ENCODE measurements at regions of chr14 and their contacts with region 1.

Region 1: GRCh38 chr14:75088574-75089373 is 19.3 kb downstream of the ZC2HC1C start:
- DNase-seq: peak; percentile 52
- H3K4me3 ChIP-seq: no peak overlapping the region
- H3K27ac ChIP-seq: no peak overlapping the region
- H3K4me1 ChIP-seq: no peaks in the 10 kb centered on the region
- H3K27me3 ChIP-seq: no peaks in the 10 kb centered on the region
- CTCF ChIP-seq: peak; percentile 30 to 77 (median 71)
- POLR2A ChIP-seq: no peak

Region 2: DNA sequence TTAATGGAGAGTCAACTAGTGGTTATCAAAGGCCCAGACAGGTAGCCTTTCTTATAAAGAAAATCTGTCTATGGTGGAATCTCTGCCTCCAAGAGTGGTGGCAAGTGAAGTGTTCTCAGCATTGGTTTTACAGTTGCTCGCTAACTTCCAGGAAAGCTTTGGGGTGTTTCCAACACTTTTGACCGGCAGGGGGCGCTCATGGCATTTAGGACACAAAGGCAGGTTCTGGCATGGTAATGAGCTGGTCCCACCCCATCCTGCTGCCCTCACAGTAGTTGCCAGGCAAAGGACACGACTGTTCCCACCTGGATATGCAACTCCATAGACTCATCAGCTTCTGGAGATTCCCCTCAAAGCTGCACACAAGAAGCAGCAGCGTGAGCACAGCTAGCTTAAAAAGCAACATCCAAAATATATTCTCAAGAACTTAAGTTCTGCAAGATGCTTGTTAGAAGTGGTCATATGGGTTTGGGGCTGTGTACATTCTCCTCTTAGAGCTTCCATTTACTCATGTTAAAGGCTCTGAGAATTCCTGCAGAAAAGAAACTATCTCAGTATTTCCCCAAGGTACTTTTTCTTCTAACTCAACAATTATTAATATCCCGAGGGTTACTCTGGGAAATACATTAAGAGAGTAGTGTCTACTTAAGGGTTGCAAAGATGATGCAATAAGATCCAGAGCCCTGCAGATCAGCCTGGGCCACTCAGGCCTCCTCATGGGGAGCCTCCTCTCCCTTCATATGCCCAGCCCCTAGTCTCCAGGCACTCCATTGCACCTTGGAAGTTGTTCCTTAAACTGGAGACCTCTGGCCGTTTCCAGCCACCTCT is 227.7 kb before region 1 on chr14:
- intact Hi-C with region 1: loop called (anchors 5 kb)
- DNase-seq: peak; percentile 86
- H3K4me3 ChIP-seq: no peak overlapping the region
- H3K27ac ChIP-seq: no peak overlapping the region
- H3K4me1 ChIP-seq: no peaks in the 10 kb centered on the region
- H3K27me3 ChIP-seq: no peaks in the 10 kb centered on the region
- CTCF ChIP-seq: peak; percentile 66 to 89 (median 79)
- POLR2A ChIP-seq: no peak

Region 3: GRCh38 chr14:74913986-74914573 is 174.7 kb before region 1 on chr14:
- intact Hi-C with region 1: loop called (anchors 2 kb)
- DNase-seq: peak; percentile 68
- H3K4me3 ChIP-seq: no peak overlapping the region
- H3K27ac ChIP-seq: peak overlapping the region in 1 of 2 donors; percentile 21
- H3K4me1 ChIP-seq: no peaks in the 10 kb centered on the region
- H3K27me3 ChIP-seq: no peaks in the 10 kb centered on the region
- CTCF ChIP-seq: peak; percentile 25 to 77 (median 66)
- POLR2A ChIP-seq: no peak

Region 4: DNA sequence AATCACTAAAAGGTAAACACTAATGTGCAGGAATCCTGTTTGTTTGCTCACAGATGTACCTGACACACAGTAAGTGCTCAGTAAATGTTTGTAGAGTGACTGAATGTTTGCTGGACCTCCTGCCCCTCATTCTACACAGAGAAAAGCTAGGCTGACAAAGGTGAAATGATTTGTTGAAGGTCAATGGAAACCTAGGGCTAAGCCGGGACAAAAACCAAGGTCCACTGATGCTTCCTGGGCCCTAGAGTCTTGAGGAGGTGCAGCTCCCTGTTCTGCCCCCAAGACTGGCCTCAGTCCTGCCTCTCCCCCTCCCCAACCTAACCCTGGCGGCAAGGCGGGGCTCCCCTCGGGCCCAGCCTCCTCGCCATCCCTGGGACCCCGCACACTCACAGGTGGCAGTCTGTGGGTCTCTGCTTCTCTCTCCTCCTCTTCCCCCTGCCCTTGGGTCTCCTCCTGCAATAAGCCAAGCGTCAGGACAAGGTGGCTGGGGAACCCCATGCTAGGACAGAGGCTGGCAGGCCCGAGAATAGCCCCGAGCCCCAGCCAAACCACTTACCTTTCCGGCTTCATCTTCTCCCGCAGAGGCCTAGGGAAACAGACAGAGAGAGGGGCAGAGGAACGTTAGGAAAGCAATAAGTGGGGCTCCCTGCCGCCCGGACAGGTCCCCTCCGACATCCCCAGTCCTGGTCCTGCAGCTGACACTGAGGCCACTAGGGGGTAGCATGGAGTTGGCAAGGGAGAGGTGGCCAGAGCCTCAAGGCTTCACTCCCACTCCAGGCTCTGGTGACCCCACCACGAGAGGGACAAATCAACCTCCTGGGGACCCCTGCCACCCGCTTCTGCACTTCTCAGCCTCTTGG is 142.7 kb before region 1 on chr14:
- intact Hi-C with region 1: loop called (anchors 2 kb)
- DNase-seq: peak; percentile 66
- H3K4me3 ChIP-seq: no peak overlapping the region
- H3K27ac ChIP-seq: peak overlapping the region in 1 of 2 donors; percentile 25
- H3K4me1 ChIP-seq: no peaks in the 10 kb centered on the region
- H3K27me3 ChIP-seq: no peaks in the 10 kb centered on the region
- CTCF ChIP-seq: peak; percentile 72 to 91 (median 81)
- POLR2A ChIP-seq: no peak

Region 5: DNA sequence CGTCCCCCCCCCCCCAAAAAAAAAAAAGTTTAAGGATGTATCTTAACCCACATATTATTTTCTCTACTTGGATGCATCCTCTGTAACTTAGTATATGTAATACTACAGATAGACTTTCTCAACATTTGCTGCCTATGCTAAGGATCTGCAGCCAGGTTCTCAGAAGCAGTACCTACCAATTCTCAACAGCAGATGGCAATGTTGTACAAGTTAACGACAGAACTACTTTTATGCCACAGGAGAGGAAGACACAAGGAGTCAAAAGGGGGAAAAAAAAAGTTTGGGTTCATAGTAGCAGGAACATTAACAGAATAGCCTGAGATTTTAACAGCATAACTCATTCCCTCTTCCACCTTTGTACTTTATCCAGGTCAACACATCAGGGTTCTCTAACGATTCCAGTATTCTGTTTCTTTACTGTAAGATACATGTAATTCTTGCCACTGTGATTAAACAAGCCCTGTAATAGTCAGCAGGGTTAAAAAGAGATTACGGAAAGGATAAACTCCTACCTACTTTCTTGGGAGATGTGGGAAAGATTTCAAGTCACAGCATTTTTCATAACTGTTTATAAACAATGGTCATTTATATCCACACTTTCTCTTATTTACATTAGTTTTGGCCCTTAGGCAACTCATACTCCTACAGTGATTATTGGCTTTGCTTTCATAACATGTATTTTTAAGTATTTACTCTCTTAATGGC is 43.8 kb after region 1 on chr14:
- intact Hi-C with region 1: no loop called
- DNase-seq: peak; percentile 76
- H3K4me3 ChIP-seq: no peak overlapping the region
- H3K27ac ChIP-seq: peak overlapping the region; percentile 36 to 43
- H3K4me1 ChIP-seq: no peaks in the 10 kb centered on the region
- H3K27me3 ChIP-seq: no peaks in the 10 kb centered on the region
- CTCF ChIP-seq: peak; percentile 37 to 90 (median 84)
- POLR2A ChIP-seq: no peak

Measured in prostate gland (tissue), 2 donors.